BJ (cell line): ENCODE measurements at regions of chr12 and their contacts with region 1.

Region 1: GRCh38 chr12:69540987-69541386 is 44.3 kb upstream of the CCT2 start:
- DNase-seq: peak; percentile 93
- H3K4me3 ChIP-seq: no peak overlapping the region
- H3K27me3 ChIP-seq: no peaks in the 10 kb centered on the region
- CTCF ChIP-seq: peak; percentile 24; the same call in 1 of the 2 replicates

Region 2: DNA sequence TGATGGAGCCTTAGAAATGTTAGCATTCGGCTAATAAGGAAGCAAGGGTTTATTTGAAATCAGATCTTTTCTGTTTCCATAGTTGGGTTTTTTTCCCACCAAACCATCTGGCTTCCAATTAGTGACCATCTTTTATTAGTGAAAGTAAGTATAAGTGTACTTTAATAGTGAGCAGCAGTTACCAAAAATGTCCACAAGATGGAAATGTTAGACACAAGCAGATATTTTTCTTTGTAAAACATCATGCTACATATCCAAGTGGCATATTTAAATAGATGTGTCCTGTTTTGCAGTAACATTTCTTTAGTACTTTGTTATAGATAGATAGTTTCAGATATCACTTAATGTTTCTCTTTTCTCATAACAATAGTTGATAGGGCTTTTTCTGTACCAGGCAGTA is 152.6 kb before region 1 on chr12:
- CTCF ChIA-PET with region 1: interaction called, 15 read pairs
- POLR2A ChIA-PET with region 1: no interaction called
- DNase-seq: peak; percentile 34
- H3K4me3 ChIP-seq: no peak overlapping the region
- H3K27me3 ChIP-seq: no peaks in the 10 kb centered on the region
- CTCF ChIP-seq: peak; percentile 68